ENCODE measurements at regions of chr16 and their contacts with region 1.

Region 1: DNA sequence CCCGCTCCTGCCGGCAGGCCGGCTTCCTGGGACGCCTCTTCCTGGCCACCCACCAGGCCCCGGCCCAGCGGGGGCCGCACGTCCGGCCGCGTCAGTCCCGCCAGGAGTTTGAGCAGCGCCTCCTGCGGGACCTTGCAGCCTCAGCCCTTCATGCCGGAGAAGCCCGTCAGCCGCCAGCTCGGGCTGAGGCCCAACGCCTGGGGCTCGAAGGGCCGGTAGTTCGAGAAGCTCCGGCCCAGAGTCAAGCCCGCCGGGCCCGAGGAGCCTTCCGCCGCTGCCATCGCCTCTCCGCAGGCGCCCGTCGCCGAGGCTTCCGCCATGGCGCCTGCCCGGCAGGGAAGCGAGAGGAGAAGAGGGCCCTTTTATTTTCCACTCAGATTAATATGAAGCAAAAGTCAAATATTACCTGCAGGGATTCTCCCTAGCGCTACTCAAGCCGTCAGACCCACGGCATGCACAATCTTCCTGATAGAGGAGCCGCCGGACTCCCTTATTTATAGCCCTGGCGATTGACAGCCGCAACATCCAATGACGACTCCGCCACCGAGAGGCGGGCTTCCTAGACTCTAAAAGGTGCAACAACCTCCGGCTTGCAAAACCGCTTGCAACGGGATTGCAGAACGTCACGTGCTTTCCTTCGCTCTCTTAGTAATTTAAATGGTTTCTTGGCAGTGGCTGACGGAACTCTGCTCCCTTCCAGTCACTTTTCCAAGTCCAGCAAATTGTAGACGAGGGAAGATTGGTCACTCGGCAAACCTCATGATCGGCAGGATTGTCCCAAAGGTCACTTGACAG is at the start of gene SEPHS2:
- DNase-seq: peak; percentile 87
- ATAC-seq: peak; percentile 96
- H3K4me3 Mint-ChIP-seq: peak within 1 kb of the TSS; percentile 95
- H3K27ac Mint-ChIP-seq: peak within 1 kb of the TSS; percentile 96
- H3K4me1 Mint-ChIP-seq: peaks cover 45% of the 10 kb centered on the region
- H3K27me3 Mint-ChIP-seq: no peaks in the 10 kb centered on the region
- CTCF ChIP-seq: no peak
- total RNA-seq, gene SEPHS2: 79.1 and 80.0 TPM in 2 replicates

Region 2: DNA sequence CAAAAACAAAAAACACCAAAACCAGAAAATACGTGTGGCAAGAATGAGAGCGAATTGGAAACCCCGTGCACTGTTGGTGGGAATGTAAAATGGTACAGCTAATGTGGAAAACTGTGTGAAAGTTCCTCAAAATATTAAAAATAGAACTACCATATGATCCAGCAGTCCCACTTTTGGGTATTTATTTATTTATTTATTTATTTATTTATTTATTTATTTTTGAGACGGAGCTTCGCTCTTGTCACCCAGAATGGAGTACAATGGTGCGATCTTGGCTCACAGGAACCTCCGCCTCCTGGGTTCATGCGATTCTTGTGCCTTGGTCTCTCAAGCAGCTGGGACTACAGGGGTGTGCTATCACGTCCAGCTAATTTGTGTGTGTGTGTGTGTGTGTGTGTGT is 293.1 kb before region 1 on chr16:
- CTCF ChIA-PET with region 1: no interaction called
- POLR2A ChIA-PET with region 1: no interaction called
- intact Hi-C with region 1: no loop called
- DNase-seq: no peak
- ATAC-seq: no peak
- H3K4me3 Mint-ChIP-seq: no peak overlapping the region
- H3K27ac Mint-ChIP-seq: no peak overlapping the region
- H3K4me1 Mint-ChIP-seq: peaks cover 5% of the 10 kb centered on the region
- H3K27me3 Mint-ChIP-seq: no peaks in the 10 kb centered on the region
- CTCF ChIP-seq: no peak

Region 3: GRCh38 chr16:30406795-30407101 is 38.9 kb before region 1 on chr16:
- CTCF ChIA-PET with region 1: no interaction called
- POLR2A ChIA-PET with region 1: no interaction called
- intact Hi-C with region 1: no loop called
- DNase-seq: no peak
- ATAC-seq: peak; percentile 8
- H3K4me3 Mint-ChIP-seq: peak overlapping the region; percentile 89
- H3K27ac Mint-ChIP-seq: peak overlapping the region; percentile 90
- H3K4me1 Mint-ChIP-seq: peaks cover 27% of the 10 kb centered on the region
- H3K27me3 Mint-ChIP-seq: peaks cover under 1% of the 10 kb centered on the region
- CTCF ChIP-seq: no peak

Region 4: DNA sequence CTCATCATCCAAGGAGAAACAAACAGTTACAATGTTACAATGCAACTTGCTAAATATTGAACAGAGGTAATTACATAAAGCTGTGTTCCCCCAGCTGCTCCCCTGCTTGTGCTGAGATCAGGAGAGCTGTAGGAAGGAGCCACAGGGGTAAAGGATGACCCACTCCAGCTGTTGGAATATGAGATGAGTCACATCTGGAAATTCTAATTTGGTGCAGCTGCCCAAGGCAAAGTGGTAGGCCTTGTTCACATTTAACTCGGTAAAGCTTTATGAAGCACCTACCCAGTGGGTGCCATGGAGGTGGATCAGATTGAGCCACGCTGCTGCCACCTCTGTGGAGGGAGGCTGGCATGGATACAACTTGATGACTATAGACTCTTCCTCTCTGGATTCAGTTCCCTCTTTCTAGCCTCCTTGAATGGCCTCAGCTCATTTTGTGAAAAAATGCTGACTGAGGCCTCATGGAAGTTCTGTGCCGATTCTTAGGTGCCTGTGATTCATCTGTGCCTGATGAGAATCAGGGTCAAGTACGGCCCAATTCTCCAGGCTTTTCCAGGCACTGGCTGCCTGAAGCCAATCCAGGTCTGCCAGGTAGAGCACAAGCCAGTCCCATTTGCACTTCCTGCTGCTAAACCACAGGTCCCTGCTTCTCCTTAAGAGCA is 157.1 kb after region 1 on chr16:
- CTCF ChIA-PET with region 1: interaction called, 3 read pairs
- POLR2A ChIA-PET with region 1: no interaction called
- intact Hi-C with region 1: loop called (anchors 1 kb)
- DNase-seq: no peak
- ATAC-seq: no peak
- H3K4me3 Mint-ChIP-seq: no peak overlapping the region
- H3K27ac Mint-ChIP-seq: no peak overlapping the region
- H3K4me1 Mint-ChIP-seq: peaks cover 3% of the 10 kb centered on the region
- H3K27me3 Mint-ChIP-seq: no peaks in the 10 kb centered on the region
- CTCF ChIP-seq: no peak

Measured in activated B cell treated with CpG ODN at 0.5 μM for 24 hours (primary cell).